ENCODE measurements at regions of chr4 and their contacts with region 1.

Region 1: GRCh38 chr4:98467627-98468072 is 190.8 kb downstream of the TSPAN5 start:
- DNase-seq: peak; percentile 63
- H3K4me3 Mint-ChIP-seq: peak overlapping the region; percentile 69
- H3K27ac Mint-ChIP-seq: peak overlapping the region; percentile 29
- H3K4me1 Mint-ChIP-seq: peaks cover 54% of the 10 kb centered on the region
- H3K27me3 Mint-ChIP-seq: no peaks in the 10 kb centered on the region

Region 2: GRCh38 chr4:98482847-98483806 is 15.5 kb after region 1 on chr4:
- intact Hi-C with region 1: loop called (anchors 1 kb)
- DNase-seq: peak; percentile 40
- H3K4me3 Mint-ChIP-seq: peak overlapping the region; percentile 72
- H3K27ac Mint-ChIP-seq: peak overlapping the region; percentile 98
- H3K4me1 Mint-ChIP-seq: peaks cover 92% of the 10 kb centered on the region
- H3K27me3 Mint-ChIP-seq: no peaks in the 10 kb centered on the region

Region 3: GRCh38 chr4:98827661-98828060 is 360.0 kb after region 1 on chr4:
- intact Hi-C with region 1: loop called (anchors 1 kb)
- DNase-seq: no peak
- H3K4me3 Mint-ChIP-seq: no peak overlapping the region
- H3K27ac Mint-ChIP-seq: no peak overlapping the region
- H3K4me1 Mint-ChIP-seq: no peaks in the 10 kb centered on the region
- H3K27me3 Mint-ChIP-seq: peaks cover 9% of the 10 kb centered on the region

Region 4: GRCh38 chr4:99054428-99054994 is 586.9 kb after region 1 on chr4:
- intact Hi-C with region 1: loop called (anchors 5 kb)
- DNase-seq: no peak
- H3K4me3 Mint-ChIP-seq: no peak overlapping the region
- H3K27ac Mint-ChIP-seq: peak overlapping the region; percentile 7
- H3K4me1 Mint-ChIP-seq: peaks cover 49% of the 10 kb centered on the region
- H3K27me3 Mint-ChIP-seq: no peaks in the 10 kb centered on the region